PC-3 (cell line): ENCODE measurements at regions of chr3 and their contacts with region 1.

Region 1: GRCh38 chr3:43465087-43465486 is 156.7 kb downstream of the ANO10 start:
- DNase-seq: peak; percentile 91
- ATAC-seq: peak; percentile 99
- H3K4me3 ChIP-seq: no peak overlapping the region
- H3K27ac ChIP-seq: peak overlapping the region; percentile 87
- H3K4me1 ChIP-seq: peaks cover 18% of the 10 kb centered on the region
- H3K27me3 ChIP-seq: no peaks in the 10 kb centered on the region
- CTCF ChIP-seq: no peak

Region 2: GRCh38 chr3:43105596-43106292 is 359.3 kb before region 1 on chr3 and contains the start of gene POMGNT2:
- CTCF ChIA-PET with region 1: no interaction called
- POLR2A ChIA-PET with region 1: no interaction called
- intact Hi-C with region 1: loop called (anchors 1 kb)
- DNase-seq: peak; percentile 96
- ATAC-seq: peak; percentile 97
- H3K4me3 ChIP-seq: peak within 1 kb of the TSS; percentile 91
- H3K27ac ChIP-seq: no peak within 1 kb of the TSS
- H3K4me1 ChIP-seq: peaks cover 14% of the 10 kb centered on the region
- H3K27me3 ChIP-seq: no peaks in the 10 kb centered on the region
- CTCF ChIP-seq: no peak
- total RNA-seq, gene POMGNT2: 45.7 and 51.5 TPM in 2 replicates

Region 3: GRCh38 chr3:43389388-43390254 is 75.5 kb before region 1 on chr3:
- CTCF ChIA-PET with region 1: no interaction called
- POLR2A ChIA-PET with region 1: no interaction called
- intact Hi-C with region 1: loop called (anchors 1 kb)
- DNase-seq: peak; percentile 97
- ATAC-seq: peak; percentile 95
- H3K4me3 ChIP-seq: peak overlapping the region; percentile 31; the same call in 1 of the 2 replicates
- H3K27ac ChIP-seq: peak overlapping the region; percentile 96
- H3K4me1 ChIP-seq: peaks cover 28% of the 10 kb centered on the region
- H3K27me3 ChIP-seq: no peaks in the 10 kb centered on the region
- CTCF ChIP-seq: no peak

Region 4: DNA sequence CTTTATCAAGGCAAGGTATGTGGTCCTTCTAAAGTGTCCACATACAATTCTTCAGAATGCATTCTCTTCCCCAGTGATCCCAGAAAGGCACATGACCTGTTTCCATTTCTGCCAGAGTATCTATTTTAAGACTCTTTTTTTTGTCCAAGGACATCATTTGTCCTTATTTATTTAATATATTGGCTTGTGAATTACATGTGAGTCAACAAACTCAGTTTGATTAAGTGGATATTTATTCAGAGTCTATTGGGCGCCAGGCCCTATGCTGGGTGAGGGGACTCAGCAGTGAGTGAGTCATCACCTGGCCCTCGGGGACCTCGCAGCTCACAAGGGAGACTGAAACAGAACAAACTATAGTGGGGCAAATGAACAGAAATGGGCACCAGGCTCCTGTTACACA is 41.9 kb before region 1 on chr3:
- CTCF ChIA-PET with region 1: no interaction called
- POLR2A ChIA-PET with region 1: no interaction called
- intact Hi-C with region 1: loop called (anchors 2 kb)
- DNase-seq: peak; percentile 71
- ATAC-seq: peak; percentile 80
- H3K4me3 ChIP-seq: no peak overlapping the region
- H3K27ac ChIP-seq: peak overlapping the region; percentile 62
- H3K4me1 ChIP-seq: peaks cover 33% of the 10 kb centered on the region
- H3K27me3 ChIP-seq: no peaks in the 10 kb centered on the region
- CTCF ChIP-seq: no peak

Region 5: GRCh38 chr3:43512754-43513404 is 47.8 kb after region 1 on chr3:
- CTCF ChIA-PET with region 1: no interaction called
- POLR2A ChIA-PET with region 1: no interaction called
- intact Hi-C with region 1: no loop called
- DNase-seq: peak; percentile 17
- ATAC-seq: peak; percentile 27; the same call in 1 of the 2 replicates
- H3K4me3 ChIP-seq: no peak overlapping the region
- H3K27ac ChIP-seq: no peak overlapping the region
- H3K4me1 ChIP-seq: no peaks in the 10 kb centered on the region
- H3K27me3 ChIP-seq: no peaks in the 10 kb centered on the region
- CTCF ChIP-seq: no peak